ENCODE measurements at regions of chr11 and their contacts with region 1.

Region 1: DNA sequence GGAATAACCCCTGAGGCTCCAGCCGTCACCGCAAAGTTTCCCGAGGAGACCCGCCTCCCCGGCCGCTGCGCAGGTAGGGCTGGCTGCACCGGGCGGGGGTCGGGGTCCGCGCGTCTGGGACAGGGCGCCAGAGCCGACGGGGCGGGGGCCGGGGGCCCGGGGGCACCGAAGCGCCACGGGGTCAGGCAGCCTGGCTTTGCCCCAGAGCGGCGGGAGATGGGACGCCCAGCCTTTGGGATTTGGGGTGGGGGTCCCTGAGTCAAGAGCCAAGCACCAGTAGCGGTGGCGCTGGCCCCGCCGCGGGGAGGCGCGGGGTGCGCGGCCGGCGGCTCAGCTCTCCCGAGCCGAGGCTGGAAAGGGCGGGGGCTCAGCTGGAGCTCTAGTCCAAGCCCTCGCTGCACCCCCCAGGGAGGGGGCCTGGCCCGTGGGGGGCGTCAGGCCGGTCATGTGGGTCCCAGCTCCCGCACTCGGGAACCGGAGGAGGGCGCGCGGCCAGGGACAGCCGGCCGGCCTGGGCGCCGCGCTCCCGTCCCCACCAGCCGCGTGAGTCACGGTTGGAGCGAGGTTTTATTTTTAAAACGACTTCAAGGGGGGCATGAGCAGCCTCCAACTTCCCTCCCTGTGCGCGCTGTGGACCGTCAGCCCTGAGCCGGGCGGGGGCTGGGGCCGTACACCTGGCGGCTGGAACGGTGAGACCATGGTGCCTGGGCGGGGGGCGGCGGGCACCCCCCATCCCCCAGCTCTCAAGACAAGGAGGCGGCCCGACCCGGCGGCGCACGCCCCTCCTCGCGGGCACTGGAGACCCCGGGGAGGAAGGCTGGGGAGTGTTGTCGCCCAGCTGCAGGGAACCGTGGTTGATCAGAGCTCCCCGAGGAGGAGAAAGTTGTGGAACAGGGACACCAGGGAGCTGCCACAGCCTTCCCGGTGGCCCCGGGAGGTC is 626 bp downstream of the FLRT1 start:
- DNase-seq: no peak
- ATAC-seq: peak; percentile 2; the same call in 1 of the 2 replicates
- H3K4me3 Mint-ChIP-seq: peak overlapping the region; percentile 34
- H3K27ac Mint-ChIP-seq: no peak overlapping the region
- H3K4me1 Mint-ChIP-seq: peaks cover 14% of the 10 kb centered on the region
- H3K27me3 Mint-ChIP-seq: peaks cover 93% of the 10 kb centered on the region
- CTCF ChIP-seq: no peak

Region 2: GRCh38 chr11:63945477-63946163 is 90.7 kb before region 1 on chr11:
- CTCF ChIA-PET with region 1: no interaction called
- POLR2A ChIA-PET with region 1: no interaction called
- DNase-seq: peak; percentile 68
- ATAC-seq: peak; percentile 95
- H3K4me3 Mint-ChIP-seq: no peak overlapping the region
- H3K27ac Mint-ChIP-seq: peak overlapping the region; percentile 80
- H3K4me1 Mint-ChIP-seq: peaks cover 4% of the 10 kb centered on the region; the same call in 1 of the 2 replicates
- H3K27me3 Mint-ChIP-seq: no peaks in the 10 kb centered on the region
- CTCF ChIP-seq: peak; percentile 41

Region 3: GRCh38 chr11:63958008-63958407 is 78.3 kb before region 1 on chr11:
- CTCF ChIA-PET with region 1: no interaction called
- POLR2A ChIA-PET with region 1: no interaction called
- DNase-seq: no peak
- ATAC-seq: no peak
- H3K4me3 Mint-ChIP-seq: no peak overlapping the region
- H3K27ac Mint-ChIP-seq: no peak overlapping the region
- H3K4me1 Mint-ChIP-seq: peaks cover 4% of the 10 kb centered on the region; the same call in 1 of the 2 replicates
- H3K27me3 Mint-ChIP-seq: no peaks in the 10 kb centered on the region
- CTCF ChIP-seq: no peak

Region 4: GRCh38 chr11:64007629-64008282 is 28.6 kb before region 1 on chr11:
- CTCF ChIA-PET with region 1: interaction called, 10 read pairs
- POLR2A ChIA-PET with region 1: no interaction called
- DNase-seq: peak; percentile 64
- ATAC-seq: peak; percentile 61
- H3K4me3 Mint-ChIP-seq: peak overlapping the region; percentile 69
- H3K27ac Mint-ChIP-seq: no peak overlapping the region
- H3K4me1 Mint-ChIP-seq: peaks cover 18% of the 10 kb centered on the region
- H3K27me3 Mint-ChIP-seq: peaks cover 100% of the 10 kb centered on the region
- CTCF ChIP-seq: no peak

Region 5: DNA sequence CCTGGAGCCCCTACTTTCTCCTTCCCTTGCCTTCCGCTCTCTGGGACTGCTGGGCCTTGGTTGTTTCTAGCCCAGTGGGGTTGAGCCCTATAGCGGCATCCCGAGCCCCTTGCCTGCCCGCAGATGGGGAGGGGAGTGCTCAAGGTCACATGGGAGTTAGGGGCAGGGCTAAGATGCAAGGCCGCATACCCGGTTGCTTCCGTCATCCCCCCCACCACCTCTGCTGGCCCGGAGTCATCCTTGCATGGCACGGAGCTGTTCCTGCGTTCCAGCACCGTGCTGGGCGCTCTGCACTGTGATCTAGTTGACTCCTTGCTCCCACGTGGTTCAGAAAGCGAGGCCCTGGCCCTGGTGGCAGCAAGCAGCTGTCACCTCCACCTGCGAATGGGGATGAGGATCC is 17.3 kb after region 1 on chr11:
- CTCF ChIA-PET with region 1: interaction called, 12 read pairs
- POLR2A ChIA-PET with region 1: interaction called, 3 read pairs
- DNase-seq: peak; percentile 74
- ATAC-seq: peak; percentile 91
- H3K4me3 Mint-ChIP-seq: no peak overlapping the region
- H3K27ac Mint-ChIP-seq: peak overlapping the region; percentile 41; the same call in 1 of the 2 replicates
- H3K4me1 Mint-ChIP-seq: peaks cover 29% of the 10 kb centered on the region
- H3K27me3 Mint-ChIP-seq: peaks cover 91% of the 10 kb centered on the region
- CTCF ChIP-seq: no peak

Region 6: DNA sequence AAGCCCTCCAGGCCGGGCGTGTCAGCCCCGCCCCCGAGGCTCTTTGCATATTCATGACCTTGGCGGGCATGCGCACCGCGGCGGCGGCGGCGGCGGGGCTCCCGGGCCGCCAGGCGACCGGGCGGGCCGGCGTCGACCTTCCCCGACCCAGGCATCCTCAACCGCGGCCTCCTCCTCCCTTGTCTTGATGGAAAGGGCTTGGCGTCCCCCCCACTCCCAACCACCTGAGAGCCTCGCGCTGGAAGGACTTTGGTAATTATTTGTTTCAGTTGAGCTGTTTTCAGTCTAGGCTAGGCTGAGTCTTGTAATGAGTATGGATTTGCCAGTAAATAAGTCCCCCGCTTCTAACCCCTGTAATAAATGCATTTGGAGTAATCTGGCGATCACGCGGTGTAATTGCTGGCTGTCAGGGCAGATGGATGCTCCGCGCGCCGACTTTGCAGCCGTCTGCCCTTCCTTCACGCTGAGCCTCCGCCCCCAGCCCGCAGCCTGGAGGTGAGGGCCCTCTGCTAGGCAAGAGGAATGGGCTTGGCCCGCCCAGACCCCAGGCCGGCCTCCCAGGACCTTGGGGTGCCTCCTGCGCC is 24.6 kb after region 1 on chr11:
- CTCF ChIA-PET with region 1: interaction called, 11 read pairs
- POLR2A ChIA-PET with region 1: no interaction called
- DNase-seq: peak; percentile 83
- ATAC-seq: peak; percentile 73
- H3K4me3 Mint-ChIP-seq: peak overlapping the region; percentile 74
- H3K27ac Mint-ChIP-seq: no peak overlapping the region
- H3K4me1 Mint-ChIP-seq: peaks cover 9% of the 10 kb centered on the region
- H3K27me3 Mint-ChIP-seq: peaks cover 98% of the 10 kb centered on the region
- CTCF ChIP-seq: no peak

Region 7: GRCh38 chr11:64074239-64074638 is 37.9 kb after region 1 on chr11:
- CTCF ChIA-PET with region 1: interaction called, 13 read pairs
- POLR2A ChIA-PET with region 1: no interaction called
- DNase-seq: no peak
- ATAC-seq: no peak
- H3K4me3 Mint-ChIP-seq: no peak overlapping the region
- H3K27ac Mint-ChIP-seq: no peak overlapping the region
- H3K4me1 Mint-ChIP-seq: peaks cover 5% of the 10 kb centered on the region; the same call in 1 of the 2 replicates
- H3K27me3 Mint-ChIP-seq: peaks cover 91% of the 10 kb centered on the region
- CTCF ChIP-seq: no peak